Activated CD4-positive, alpha-beta T cell treated with anti-CD3 and anti-CD28 coated beads, Interleukin-2, amount 10 ng/mL, durations not matched to agents 7 days and 5 days (primary cell): ENCODE measurements at regions of chr10 and their contacts with region 1.

Region 1: DNA sequence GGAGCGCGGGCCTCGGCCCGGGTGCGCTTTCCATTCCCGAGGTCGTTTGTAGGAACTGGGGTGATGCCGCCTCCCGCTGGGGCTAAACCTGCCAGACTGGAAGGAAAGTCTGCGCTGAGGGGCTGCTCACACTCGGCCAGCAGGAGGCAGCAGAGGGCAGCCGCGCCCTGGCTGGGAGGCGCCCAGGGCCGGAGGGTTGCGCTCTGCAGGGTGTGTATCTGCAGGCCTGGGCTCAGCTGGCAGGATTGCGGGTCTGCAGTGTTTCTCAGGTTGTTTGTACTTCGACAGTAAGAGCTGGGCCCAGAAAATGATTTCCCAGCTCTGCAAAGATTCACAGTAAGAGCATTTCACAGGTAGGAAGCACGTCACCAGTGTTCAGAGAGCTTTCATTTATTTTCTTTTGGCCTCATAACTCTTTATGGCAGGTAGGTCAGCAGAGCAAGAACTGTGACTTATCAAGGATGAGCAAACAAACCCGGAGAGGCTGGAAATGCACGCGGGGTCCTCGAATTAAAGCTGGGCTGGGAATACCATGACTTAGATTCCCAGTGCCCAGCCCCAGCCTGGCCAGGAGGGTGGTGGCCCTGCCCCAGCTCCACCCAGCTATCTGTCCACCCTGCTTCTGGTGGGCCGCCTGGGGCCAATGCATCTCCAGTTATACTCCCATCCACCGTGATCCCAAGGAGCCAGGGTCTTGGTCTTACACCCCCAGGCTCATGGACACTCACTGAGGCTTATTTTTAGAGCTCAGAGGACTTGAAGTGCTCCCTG is 15.2 kb upstream of the PPP2R2D start:
- DNase-seq: peak; percentile 84
- H3K4me3 Mint-ChIP-seq: no peak overlapping the region
- H3K27ac Mint-ChIP-seq: no peak overlapping the region
- H3K4me1 Mint-ChIP-seq: peaks cover 11% of the 10 kb centered on the region
- H3K27me3 Mint-ChIP-seq: no peaks in the 10 kb centered on the region

Region 2: DNA sequence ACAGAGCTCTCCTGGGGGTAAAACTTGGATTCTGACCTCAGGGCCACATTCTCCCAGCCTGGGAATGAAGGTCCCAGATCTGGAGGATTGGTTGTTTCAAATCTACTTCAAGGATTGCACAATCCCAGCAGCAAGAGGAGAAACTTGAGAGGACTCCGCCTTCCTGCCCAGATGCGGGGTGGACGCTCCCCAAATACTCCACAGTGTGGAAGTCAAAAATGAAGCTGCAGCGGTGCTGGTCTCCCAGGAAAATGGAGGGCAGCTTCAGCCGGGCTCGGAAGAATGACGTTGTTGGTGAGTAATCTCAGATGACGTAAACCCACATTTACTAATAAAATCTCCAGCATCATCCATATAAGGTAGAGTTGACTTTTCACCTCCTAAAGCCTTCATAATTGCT is 16.2 kb before region 1 on chr10:
- CTCF ChIA-PET with region 1: no interaction called
- POLR2A ChIA-PET with region 1: no interaction called
- DNase-seq: no peak
- H3K4me3 Mint-ChIP-seq: no peak overlapping the region
- H3K27ac Mint-ChIP-seq: no peak overlapping the region
- H3K4me1 Mint-ChIP-seq: no peaks in the 10 kb centered on the region
- H3K27me3 Mint-ChIP-seq: no peaks in the 10 kb centered on the region

Region 3: DNA sequence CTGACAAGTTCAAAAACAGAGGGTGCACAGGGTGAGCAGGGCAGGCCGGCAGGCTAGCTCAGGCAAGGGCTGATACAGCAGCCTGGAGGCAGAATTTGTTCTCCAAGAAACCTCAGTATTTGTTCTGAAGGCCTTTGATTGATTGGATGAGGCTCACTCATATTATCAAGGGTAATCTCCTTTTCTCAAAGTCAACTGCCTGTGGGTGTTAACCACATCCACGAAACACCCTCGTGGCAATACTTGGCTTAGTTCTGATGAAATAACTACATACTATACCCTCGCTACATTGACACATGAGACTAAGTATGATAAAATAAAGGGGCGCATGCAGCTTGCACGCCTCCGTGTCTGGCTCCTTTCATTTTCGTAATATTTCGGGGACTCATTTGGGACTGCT is 10.8 kb after region 1 on chr10:
- CTCF ChIA-PET with region 1: interaction called, 12 read pairs
- POLR2A ChIA-PET with region 1: no interaction called
- DNase-seq: peak; percentile 59
- H3K4me3 Mint-ChIP-seq: no peak overlapping the region
- H3K27ac Mint-ChIP-seq: peak overlapping the region; percentile 67
- H3K4me1 Mint-ChIP-seq: peaks cover 28% of the 10 kb centered on the region
- H3K27me3 Mint-ChIP-seq: peaks cover 16% of the 10 kb centered on the region

Region 4: GRCh38 chr10:132023092-132023811 is 137.7 kb after region 1 on chr10:
- CTCF ChIA-PET with region 1: interaction called, 30 read pairs
- POLR2A ChIA-PET with region 1: interaction called, 3 read pairs
- DNase-seq: peak; percentile 80
- H3K4me3 Mint-ChIP-seq: no peak overlapping the region
- H3K27ac Mint-ChIP-seq: no peak overlapping the region
- H3K4me1 Mint-ChIP-seq: peaks cover 5% of the 10 kb centered on the region
- H3K27me3 Mint-ChIP-seq: peaks cover 32% of the 10 kb centered on the region